ENCODE measurements at regions of chr1 and their contacts with region 1.

Region 1: GRCh38 chr1:76176020-76176419 is 101.5 kb downstream of the ST6GALNAC3 start:
- DNase-seq: no peak
- ATAC-seq: no peak

Region 2: DNA sequence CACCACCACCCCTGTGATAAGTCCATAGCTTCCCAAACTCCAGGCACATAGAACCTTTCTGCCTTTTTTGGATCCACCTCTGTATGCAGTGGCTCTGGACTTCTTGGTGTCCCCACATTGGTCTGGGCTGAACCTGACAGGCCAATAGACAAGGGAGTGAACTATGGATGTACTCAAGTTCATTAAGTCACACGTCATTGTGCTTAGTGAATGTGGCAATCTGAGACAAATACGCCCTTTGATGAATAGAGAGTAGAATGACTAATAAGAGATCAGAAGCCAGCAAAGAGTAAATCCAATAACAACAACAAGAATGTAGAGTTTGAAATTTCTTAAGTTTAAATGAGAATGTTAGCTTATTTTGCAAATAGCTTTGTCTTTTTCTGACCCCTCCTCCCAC is 13.3 kb after region 1 on chr1:
- intact Hi-C with region 1: loop called (anchors 1 kb)
- DNase-seq: no peak
- ATAC-seq: no peak

Measured in Right ventricle myocardium inferior (tissue), 1 donor.